A673 (cell line): ENCODE measurements at regions of chr20 and their contacts with region 1.

Region 1: GRCh38 chr20:37807471-37808232 is 95.3 kb upstream of the VSTM2L start:
- DNase-seq: no peak
- H3K4me3 ChIP-seq: no peak overlapping the region
- H3K27ac ChIP-seq: no peak overlapping the region
- H3K4me1 ChIP-seq: no peaks in the 10 kb centered on the region
- H3K27me3 ChIP-seq: no peaks in the 10 kb centered on the region
- CTCF ChIP-seq: no peak

Region 2: DNA sequence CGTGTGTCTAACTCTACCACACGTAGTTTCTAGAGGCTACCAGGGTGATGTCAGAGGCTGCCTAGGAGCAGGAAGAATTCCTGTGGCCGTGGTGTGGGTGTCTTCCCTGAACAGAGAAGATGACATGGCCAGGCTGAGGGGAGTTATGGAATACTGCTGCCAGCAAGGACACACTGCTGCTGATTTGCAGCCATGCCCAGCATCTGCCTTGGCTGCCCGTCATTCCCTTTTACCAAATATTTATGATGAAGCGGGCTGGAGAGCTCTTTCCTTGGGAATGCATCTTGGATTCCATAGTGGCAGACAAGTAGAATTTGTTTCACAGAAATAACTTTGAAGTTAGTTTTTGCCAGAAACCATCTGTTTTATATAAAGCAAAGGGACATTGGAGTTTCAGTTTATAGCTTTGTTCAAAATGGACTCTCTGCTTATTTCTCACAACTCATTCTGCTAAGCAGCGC is 14.5 kb after region 1 on chr20:
- CTCF ChIA-PET with region 1: interaction called, 15 read pairs
- POLR2A ChIA-PET with region 1: no interaction called
- intact Hi-C with region 1: no loop called
- DNase-seq: peak; percentile 38
- H3K4me3 ChIP-seq: no peak overlapping the region
- H3K27ac ChIP-seq: no peak overlapping the region
- H3K4me1 ChIP-seq: peaks cover 9% of the 10 kb centered on the region
- H3K27me3 ChIP-seq: no peaks in the 10 kb centered on the region
- CTCF ChIP-seq: no peak

Region 3: GRCh38 chr20:37956084-37956483 is 148.4 kb after region 1 on chr20:
- CTCF ChIA-PET with region 1: no interaction called
- POLR2A ChIA-PET with region 1: no interaction called
- intact Hi-C with region 1: no loop called
- DNase-seq: peak; percentile 63
- H3K4me3 ChIP-seq: no peak overlapping the region
- H3K27ac ChIP-seq: no peak overlapping the region
- H3K4me1 ChIP-seq: peaks cover 9% of the 10 kb centered on the region
- H3K27me3 ChIP-seq: no peaks in the 10 kb centered on the region
- CTCF ChIP-seq: no peak; the same call in 1 of the 2 replicates